A673 (cell line): ENCODE measurements at regions of chr3 and their contacts with region 1.

Region 1: GRCh38 chr3:170869239-170869590 is 780 bp downstream of the RPL22L1 start:
- DNase-seq: peak; percentile 17
- H3K4me3 ChIP-seq: peak overlapping the region; percentile 76
- H3K27ac ChIP-seq: peak overlapping the region; percentile 92
- H3K4me1 ChIP-seq: peaks cover 22% of the 10 kb centered on the region
- H3K27me3 ChIP-seq: no peaks in the 10 kb centered on the region
- CTCF ChIP-seq: no peak

Region 2: GRCh38 chr3:170211668-170212067 is 657.5 kb before region 1 on chr3:
- CTCF ChIA-PET with region 1: no interaction called
- POLR2A ChIA-PET with region 1: interaction called, 12 read pairs
- intact Hi-C with region 1: no loop called
- DNase-seq: no peak
- H3K4me3 ChIP-seq: no peak overlapping the region
- H3K27ac ChIP-seq: no peak overlapping the region
- H3K4me1 ChIP-seq: no peaks in the 10 kb centered on the region
- H3K27me3 ChIP-seq: no peaks in the 10 kb centered on the region
- CTCF ChIP-seq: no peak